Colonic mucosa (tissue), 4 donors: ENCODE measurements at regions of chr12 and their contacts with region 1.

Region 1: GRCh38 chr12:89542912-89543592 is 17.2 kb upstream of the POC1B start:
- DNase-seq: peak; percentile 81
- H3K4me3 ChIP-seq: no peak overlapping the region
- H3K27ac ChIP-seq: no peak overlapping the region
- H3K4me1 ChIP-seq: peaks cover 2% of the 10 kb centered on the region
- H3K27me3 ChIP-seq: no peaks in the 10 kb centered on the region
- CTCF ChIP-seq: peak; percentile 81

Region 2: DNA sequence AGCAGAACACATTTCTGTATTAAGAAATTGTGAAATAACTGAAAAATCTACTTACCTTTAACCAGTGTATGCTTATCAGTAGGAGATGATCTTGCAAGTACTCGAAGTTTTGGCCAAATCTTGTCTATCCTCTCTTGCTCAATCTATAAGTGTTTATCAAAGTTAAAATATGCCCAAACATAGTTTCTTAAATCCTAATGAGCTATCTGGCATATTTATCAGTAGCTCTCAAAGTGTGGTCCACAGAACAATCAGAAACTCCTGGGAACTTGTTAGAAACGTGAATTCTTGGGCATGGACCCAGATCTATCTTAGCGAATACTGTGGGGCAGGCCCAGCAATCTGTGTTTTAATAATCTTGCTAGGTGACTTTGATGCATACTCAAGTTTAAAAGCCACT is 67.3 kb after region 1 on chr12:
- intact Hi-C with region 1: no loop called
- DNase-seq: no peak
- H3K4me3 ChIP-seq: no peak overlapping the region
- H3K27ac ChIP-seq: no peak overlapping the region
- H3K4me1 ChIP-seq: no peaks in the 10 kb centered on the region
- H3K27me3 ChIP-seq: no peaks in the 10 kb centered on the region
- CTCF ChIP-seq: no peak

Region 3: DNA sequence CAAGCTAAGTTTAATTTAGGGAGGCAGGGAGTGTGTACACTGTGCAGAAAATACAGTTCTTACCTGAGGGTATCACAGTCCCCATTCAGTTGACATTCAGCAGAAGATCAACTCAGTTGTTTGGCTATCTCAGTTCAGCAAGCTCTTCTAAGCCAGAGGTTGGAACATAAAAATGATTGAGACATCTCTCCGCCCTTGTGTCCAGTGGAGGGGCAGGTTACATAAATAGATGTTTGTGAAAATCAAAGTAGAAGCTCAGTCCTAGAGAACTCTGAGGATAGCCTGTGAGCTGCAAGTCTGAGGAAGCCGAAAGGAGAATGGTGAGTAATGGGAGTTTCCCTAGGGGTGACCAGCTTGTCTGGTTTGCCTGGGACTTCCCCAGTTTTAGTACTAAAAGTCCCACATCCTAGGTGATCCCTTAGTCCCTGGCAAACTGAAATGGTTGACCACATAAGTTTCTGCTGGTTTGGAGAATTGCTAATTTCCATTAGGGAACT is 417.0 kb after region 1 on chr12:
- intact Hi-C with region 1: loop called (anchors 10 kb)
- DNase-seq: peak; percentile 36
- H3K4me3 ChIP-seq: no peak overlapping the region
- H3K27ac ChIP-seq: peak overlapping the region; percentile 4
- H3K4me1 ChIP-seq: peaks cover 7% of the 10 kb centered on the region
- H3K27me3 ChIP-seq: no peaks in the 10 kb centered on the region
- CTCF ChIP-seq: no peak

Region 4: DNA sequence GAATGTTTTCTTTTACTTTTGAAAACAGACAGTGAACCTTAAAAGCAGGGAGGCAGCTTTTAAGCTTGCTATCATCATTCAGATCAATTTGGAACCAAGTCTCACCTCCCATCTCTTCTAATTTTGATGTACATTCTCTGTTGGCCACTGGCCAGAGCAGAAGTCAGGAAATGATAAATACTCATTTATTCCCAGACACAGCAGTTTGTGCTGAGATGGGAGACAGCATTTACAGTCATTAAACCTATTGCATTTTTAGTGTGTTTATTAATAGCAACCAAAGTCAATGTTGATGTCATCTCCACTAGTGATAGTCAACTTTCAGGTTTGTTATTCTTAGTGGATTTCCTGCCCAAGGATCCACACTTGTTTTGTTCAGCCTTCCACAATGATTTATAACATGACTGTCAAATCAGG is 485.6 kb after region 1 on chr12:
- intact Hi-C with region 1: loop called (anchors 10 kb)
- DNase-seq: no peak
- H3K4me3 ChIP-seq: no peak overlapping the region
- H3K27ac ChIP-seq: no peak overlapping the region
- H3K4me1 ChIP-seq: no peaks in the 10 kb centered on the region
- H3K27me3 ChIP-seq: no peaks in the 10 kb centered on the region
- CTCF ChIP-seq: no peak

Region 5: DNA sequence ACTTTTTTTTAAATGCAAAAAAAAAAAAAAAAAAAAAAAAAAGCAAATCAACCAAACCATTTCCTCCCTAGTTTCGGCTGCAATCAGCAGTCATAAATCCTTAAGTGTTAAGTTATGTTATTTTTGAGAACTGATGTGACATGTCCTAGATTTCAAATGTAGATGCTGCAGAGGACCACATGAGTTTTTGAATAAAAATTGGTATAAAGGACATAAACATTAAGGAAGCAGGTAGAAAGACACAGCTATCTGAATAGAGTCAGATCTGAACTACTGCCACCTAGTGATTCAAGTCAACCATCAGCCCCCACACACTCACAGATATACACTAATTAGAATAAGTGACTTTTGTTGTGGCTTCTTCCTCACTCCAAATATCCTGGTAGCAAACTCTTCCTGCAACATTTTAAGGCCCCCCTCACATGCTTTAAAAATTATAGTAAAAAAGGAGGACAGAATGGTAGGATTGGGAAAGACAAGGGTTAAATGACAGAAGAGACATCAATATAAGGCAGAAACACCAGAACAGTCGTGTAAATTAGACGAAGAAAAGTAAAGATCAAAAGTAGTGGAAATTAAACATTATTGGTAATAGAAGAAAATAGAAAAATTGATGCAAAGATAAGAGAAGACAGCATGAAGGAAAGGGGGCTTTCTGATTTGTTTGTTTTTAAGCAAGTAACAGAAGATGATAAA is 560.1 kb after region 1 on chr12:
- intact Hi-C with region 1: loop called (anchors 5 kb)
- DNase-seq: peak; percentile 20
- H3K4me3 ChIP-seq: no peak overlapping the region
- H3K27ac ChIP-seq: no peak overlapping the region
- H3K4me1 ChIP-seq: no peaks in the 10 kb centered on the region
- H3K27me3 ChIP-seq: no peaks in the 10 kb centered on the region
- CTCF ChIP-seq: peak; percentile 55